ENCODE measurements at regions of chr19 and their contacts with region 1.

Region 1: DNA sequence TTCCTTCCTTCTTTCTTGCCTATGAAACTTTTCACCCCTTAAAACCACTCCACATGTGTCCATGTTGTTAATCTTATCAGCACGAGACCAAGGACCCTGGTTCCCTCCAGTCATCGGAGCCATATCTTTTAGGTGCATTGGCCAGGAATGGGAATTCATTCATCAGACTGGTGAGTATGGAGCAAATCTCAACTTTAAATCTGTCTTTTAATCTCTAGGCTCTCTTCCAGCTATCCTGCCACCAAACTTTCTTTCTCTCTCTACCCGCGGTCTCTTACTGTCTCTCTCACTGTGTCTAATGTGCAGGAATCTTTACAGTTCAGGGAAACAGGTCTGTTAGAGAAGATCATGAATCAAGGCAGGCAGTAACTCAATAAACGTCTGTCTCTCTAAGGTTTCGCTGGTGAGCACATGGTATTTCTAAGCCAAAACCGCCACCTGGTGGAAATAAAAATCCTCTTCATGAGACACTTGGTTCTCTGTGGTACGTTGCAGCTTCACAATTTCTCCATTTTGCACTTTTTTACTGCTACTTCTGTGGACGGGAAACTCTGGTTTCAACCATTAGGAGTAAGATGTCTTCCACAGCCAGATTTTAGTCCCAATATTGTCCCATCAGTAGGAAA is 16.1 kb downstream of the LGALS16 start:
- DNase-seq: no peak
- H3K4me3 ChIP-seq: no peak overlapping the region
- H3K27ac ChIP-seq: no peak overlapping the region
- H3K4me1 ChIP-seq: no peaks in the 10 kb centered on the region
- H3K27me3 ChIP-seq: peaks cover 0 to 21% (median 0%) of the 10 kb centered on the region in 4 donors
- CTCF ChIP-seq: peak; percentile 40 to 67 (median 50)
- POLR2A ChIP-seq: no peak

Region 2: GRCh38 chr19:39554701-39555311 is 117.0 kb before region 1 on chr19:
- intact Hi-C with region 1: loop called (anchors 5 kb)
- DNase-seq: no peak
- H3K4me3 ChIP-seq: no peak overlapping the region
- H3K27ac ChIP-seq: no peak overlapping the region
- H3K4me1 ChIP-seq: peaks cover 0 to 8% (median 0%) of the 10 kb centered on the region in 3 donors
- H3K27me3 ChIP-seq: peaks cover 0 to 8% (median 0%) of the 10 kb centered on the region in 4 donors
- CTCF ChIP-seq: no peak
- POLR2A ChIP-seq: no peak

Region 3: DNA sequence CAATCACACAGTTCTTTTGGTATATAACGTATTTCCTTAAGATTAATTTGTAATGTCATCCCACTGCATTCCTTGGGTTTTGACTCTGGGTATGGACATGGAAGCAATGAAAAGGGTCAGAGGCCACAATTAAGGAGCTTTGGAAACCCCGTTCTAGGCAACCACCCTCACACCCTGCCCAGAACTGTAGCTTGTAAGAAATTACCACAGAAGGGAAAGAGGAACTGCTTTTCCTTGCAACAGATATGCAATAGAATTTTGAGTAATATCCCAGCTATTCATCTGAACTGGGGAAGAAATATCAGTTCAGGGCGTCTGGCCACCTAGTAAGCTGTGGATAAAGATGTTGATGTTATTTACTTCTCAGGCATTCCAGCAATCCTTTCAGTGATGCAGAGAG is 67.0 kb after region 1 on chr19:
- intact Hi-C with region 1: no loop called
- DNase-seq: no peak
- H3K4me3 ChIP-seq: no peak overlapping the region
- H3K27ac ChIP-seq: no peak overlapping the region
- H3K4me1 ChIP-seq: no peaks in the 10 kb centered on the region
- H3K27me3 ChIP-seq: peaks cover 0 to 15% (median 0%) of the 10 kb centered on the region in 4 donors
- CTCF ChIP-seq: no peak
- POLR2A ChIP-seq: no peak

Region 4: GRCh38 chr19:39846176-39846677 is 174.4 kb after region 1 on chr19 and contains the start of gene FBL:
- intact Hi-C with region 1: no loop called
- DNase-seq: peak; percentile 71
- H3K4me3 ChIP-seq: peak within 1 kb of the TSS; percentile 63 to 92 (median 78)
- H3K27ac ChIP-seq: peak within 1 kb of the TSS; percentile 80 to 91 (median 88)
- H3K4me1 ChIP-seq: peaks cover 6 to 56% (median 39%) of the 10 kb centered on the region in 3 donors
- H3K27me3 ChIP-seq: no peaks in the 10 kb centered on the region
- CTCF ChIP-seq: peak in 1 of 6 experiments; percentile 16
- POLR2A ChIP-seq: peak in 2 of 4 donors; percentile 26 to 69
- total RNA-seq, gene FBL: 184 to 226 (median 193) TPM

Measured in esophagus squamous epithelium (tissue), 5 donors.